ENCODE measurements at regions of chr15 and their contacts with region 1.

Region 1: GRCh38 chr15:79596051-79596507 is 163.9 kb downstream of the MINAR1 start:
- H3K4me3 Mint-ChIP-seq: no peak overlapping the region
- H3K27ac Mint-ChIP-seq: no peak overlapping the region
- H3K4me1 Mint-ChIP-seq: no peaks in the 10 kb centered on the region
- H3K27me3 Mint-ChIP-seq: peaks cover 13% of the 10 kb centered on the region

Region 2: DNA sequence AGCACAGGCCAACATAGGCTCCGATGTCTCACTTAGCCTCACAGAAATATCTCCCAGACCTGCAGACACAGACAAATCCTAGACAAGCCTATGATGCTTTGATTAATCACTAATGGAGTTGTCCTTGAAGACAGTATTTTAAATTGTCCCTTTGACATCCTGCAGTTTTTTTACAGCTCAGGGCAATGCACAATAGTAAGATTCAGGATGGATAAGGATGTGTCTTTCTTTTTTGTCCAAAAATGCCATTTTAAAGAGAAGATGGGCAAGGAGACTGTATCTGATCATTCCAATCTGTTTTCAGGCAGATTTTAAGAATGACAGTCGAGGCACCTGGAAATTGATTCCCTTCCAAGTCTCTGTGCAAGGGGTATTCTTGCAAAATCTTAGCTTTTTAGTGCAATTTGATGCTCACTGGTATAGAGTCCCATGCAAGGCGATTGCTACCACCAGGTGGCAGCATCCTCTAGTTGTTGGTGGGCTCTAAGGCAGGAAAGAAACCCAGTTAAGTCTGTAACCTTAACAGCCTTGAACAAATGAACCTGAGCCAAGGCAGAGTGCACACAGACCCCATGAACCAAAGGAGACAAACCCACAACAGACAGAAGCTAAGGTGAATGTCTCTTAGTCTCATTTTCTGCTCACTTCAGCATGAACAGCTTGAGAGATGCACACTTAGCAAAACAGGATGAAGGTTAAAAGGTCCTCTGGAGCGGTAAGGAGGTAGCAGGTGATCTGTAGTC is 215.2 kb before region 1 on chr15:
- intact Hi-C with region 1: loop called (anchors 1 kb)
- H3K4me3 Mint-ChIP-seq: no peak overlapping the region
- H3K27ac Mint-ChIP-seq: no peak overlapping the region
- H3K4me1 Mint-ChIP-seq: peaks cover 8% of the 10 kb centered on the region
- H3K27me3 Mint-ChIP-seq: no peaks in the 10 kb centered on the region

Region 3: GRCh38 chr15:79629687-79630086 is 33.6 kb after region 1 on chr15:
- intact Hi-C with region 1: no loop called
- H3K4me3 Mint-ChIP-seq: no peak overlapping the region
- H3K27ac Mint-ChIP-seq: no peak overlapping the region
- H3K4me1 Mint-ChIP-seq: no peaks in the 10 kb centered on the region
- H3K27me3 Mint-ChIP-seq: peaks cover 14% of the 10 kb centered on the region